B cell (primary cell): ENCODE measurements at regions of chr3 and their contacts with region 1.

Region 1: GRCh38 chr3:197002701-197003454 is 26.7 kb downstream of the MELTF start:
- DNase-seq: peak; percentile 89
- ATAC-seq: peak; percentile 81
- H3K4me3 ChIP-seq: peak overlapping the region in 3 of 5 experiments; percentile 56 to 59 (median 58)
- H3K4me3 Mint-ChIP-seq: no peak overlapping the region
- H3K27ac ChIP-seq: no peak overlapping the region
- H3K27ac Mint-ChIP-seq: no peak overlapping the region
- H3K4me1 ChIP-seq: peaks cover 7 to 13% of the 10 kb centered on the region in 2 donors
- H3K4me1 Mint-ChIP-seq: peaks cover 15% of the 10 kb centered on the region
- H3K27me3 ChIP-seq: peaks cover 0 to 10% (median 4%) of the 10 kb centered on the region in 4 experiments
- H3K27me3 Mint-ChIP-seq: peaks cover 15% of the 10 kb centered on the region
- CTCF ChIP-seq: peak; percentile 75

Region 2: GRCh38 chr3:196872316-196872715 is 130.6 kb before region 1 on chr3:
- CTCF ChIA-PET with region 1: no interaction called
- POLR2A ChIA-PET with region 1: no interaction called
- intact Hi-C with region 1: no loop called
- DNase-seq: no peak
- ATAC-seq: no peak
- H3K4me3 ChIP-seq: no peak overlapping the region
- H3K4me3 Mint-ChIP-seq: no peak overlapping the region
- H3K27ac ChIP-seq: no peak overlapping the region
- H3K27ac Mint-ChIP-seq: no peak overlapping the region
- H3K4me1 ChIP-seq: peaks cover 12 to 16% of the 10 kb centered on the region in 2 donors
- H3K4me1 Mint-ChIP-seq: peaks cover 39% of the 10 kb centered on the region
- H3K27me3 ChIP-seq: no peaks in the 10 kb centered on the region
- H3K27me3 Mint-ChIP-seq: no peaks in the 10 kb centered on the region
- CTCF ChIP-seq: no peak

Region 3: GRCh38 chr3:196979545-196979944 is 23.3 kb before region 1 on chr3:
- CTCF ChIA-PET with region 1: no interaction called
- POLR2A ChIA-PET with region 1: no interaction called
- intact Hi-C with region 1: loop called (anchors 2 kb)
- DNase-seq: no peak
- ATAC-seq: no peak
- H3K4me3 ChIP-seq: no peak overlapping the region
- H3K4me3 Mint-ChIP-seq: no peak overlapping the region
- H3K27ac ChIP-seq: no peak overlapping the region
- H3K27ac Mint-ChIP-seq: no peak overlapping the region
- H3K4me1 ChIP-seq: peaks cover 0 to 6% of the 10 kb centered on the region in 2 donors
- H3K4me1 Mint-ChIP-seq: no peaks in the 10 kb centered on the region
- H3K27me3 ChIP-seq: peaks cover 0 to 4% (median 0%) of the 10 kb centered on the region in 4 experiments
- H3K27me3 Mint-ChIP-seq: peaks cover 38% of the 10 kb centered on the region
- CTCF ChIP-seq: no peak

Region 4: DNA sequence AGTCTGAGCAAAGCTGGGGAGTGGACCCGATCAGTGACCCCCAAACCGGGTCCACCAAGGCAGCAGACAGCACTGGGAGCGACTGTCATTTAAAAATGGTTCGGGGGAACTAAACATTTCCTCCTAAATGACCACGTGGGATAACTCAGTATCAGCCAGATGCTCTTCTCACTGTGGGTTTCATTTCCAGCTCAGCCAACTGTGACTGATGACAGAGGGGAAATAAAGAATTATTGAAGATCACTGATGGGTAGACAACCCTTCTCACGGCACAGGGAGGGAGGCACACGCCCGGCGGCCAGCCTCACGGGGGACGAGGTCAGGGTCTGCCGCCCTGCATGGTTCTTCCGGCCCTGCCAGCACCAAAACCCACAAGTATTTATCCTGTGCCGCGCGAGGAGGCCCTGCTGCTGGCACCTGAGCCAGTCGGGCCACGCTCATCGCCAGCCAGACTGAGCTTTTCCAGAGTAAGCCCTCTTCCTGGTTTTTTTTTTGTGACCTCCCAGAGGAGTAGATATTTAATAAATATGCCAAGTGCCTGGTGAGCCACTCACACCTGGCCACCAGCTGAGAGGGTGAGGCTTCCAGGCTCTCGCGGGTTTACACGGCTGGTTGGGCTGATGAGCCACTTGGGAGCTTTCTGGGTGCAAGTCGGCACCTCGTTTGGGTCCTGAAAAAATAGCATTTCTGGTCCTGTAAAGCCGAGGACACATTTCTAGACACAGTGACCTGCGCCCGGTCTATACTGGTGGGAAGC is 20.5 kb after region 1 on chr3:
- CTCF ChIA-PET with region 1: interaction called, 64 read pairs
- POLR2A ChIA-PET with region 1: interaction called, 13 read pairs
- intact Hi-C with region 1: no loop called
- DNase-seq: peak; percentile 91
- ATAC-seq: peak; percentile 89
- H3K4me3 ChIP-seq: peak overlapping the region in 4 of 5 experiments; percentile 26 to 55 (median 40)
- H3K4me3 Mint-ChIP-seq: peak overlapping the region; percentile 92
- H3K27ac ChIP-seq: peak overlapping the region in 1 of 2 donors; percentile 15
- H3K27ac Mint-ChIP-seq: peak overlapping the region; percentile 97
- H3K4me1 ChIP-seq: peaks cover 26 to 27% of the 10 kb centered on the region in 2 donors
- H3K4me1 Mint-ChIP-seq: peaks cover 36% of the 10 kb centered on the region
- H3K27me3 ChIP-seq: peaks cover 0 to 46% (median 3%) of the 10 kb centered on the region in 4 experiments
- H3K27me3 Mint-ChIP-seq: peaks cover 24% of the 10 kb centered on the region
- CTCF ChIP-seq: no peak

Region 5: GRCh38 chr3:197029511-197030167 is 26.8 kb after region 1 on chr3 and contains the start of gene MELTF:
- CTCF ChIA-PET with region 1: interaction called, 64 read pairs
- POLR2A ChIA-PET with region 1: interaction called, 4 read pairs
- intact Hi-C with region 1: loop called (anchors 1 kb)
- DNase-seq: peak; percentile 77
- ATAC-seq: peak; percentile 86
- H3K4me3 ChIP-seq: peak within 1 kb of the TSS in 4 of 5 experiments; percentile 31 to 52 (median 50)
- H3K4me3 Mint-ChIP-seq: peak within 1 kb of the TSS; percentile 81
- H3K27ac ChIP-seq: no peak within 1 kb of the TSS
- H3K27ac Mint-ChIP-seq: peak within 1 kb of the TSS; percentile 26
- H3K4me1 ChIP-seq: peaks cover 17 to 19% of the 10 kb centered on the region in 2 donors
- H3K4me1 Mint-ChIP-seq: peaks cover 20% of the 10 kb centered on the region
- H3K27me3 ChIP-seq: peaks cover 0 to 64% (median 14%) of the 10 kb centered on the region in 4 experiments
- H3K27me3 Mint-ChIP-seq: peaks cover 31% of the 10 kb centered on the region
- CTCF ChIP-seq: peak; percentile 92
- total RNA-seq, gene MELTF: 2.9 and 3.2 TPM in 2 replicates

Region 6: DNA sequence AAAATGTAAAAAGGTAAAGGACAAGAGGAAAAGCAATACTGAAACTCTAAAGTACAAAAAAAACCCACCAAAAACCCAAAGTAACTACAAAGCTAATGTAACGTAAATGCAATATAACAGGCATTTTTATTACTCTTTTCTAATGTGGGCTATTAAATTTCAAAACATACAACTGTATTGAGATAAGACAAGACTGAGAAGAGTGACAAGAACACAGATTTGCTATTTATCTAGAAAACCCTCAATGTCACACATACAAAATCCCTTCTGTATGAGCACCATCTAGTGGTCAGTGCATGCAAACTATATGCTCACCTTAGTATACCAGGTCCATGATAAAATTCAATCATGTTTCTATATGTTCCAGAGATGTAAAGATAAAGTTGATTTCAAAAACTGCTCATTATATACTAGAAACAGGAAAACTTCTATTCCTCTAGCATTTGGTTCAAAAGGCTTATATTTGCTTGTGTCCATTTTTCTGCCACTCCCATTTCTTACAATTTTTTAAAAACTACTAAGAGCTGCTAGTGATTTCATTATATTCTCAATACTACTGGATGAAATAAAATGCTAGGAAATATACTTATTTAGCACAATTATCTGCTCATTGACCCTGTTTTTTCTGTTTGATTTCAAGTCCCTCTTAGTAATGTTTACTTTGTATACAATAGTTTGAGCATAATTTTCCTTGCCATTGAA is 184.2 kb after region 1 on chr3:
- CTCF ChIA-PET with region 1: interaction called, 39 read pairs
- POLR2A ChIA-PET with region 1: no interaction called
- intact Hi-C with region 1: loop called (anchors 1 kb)
- DNase-seq: peak; percentile 74
- ATAC-seq: peak; percentile 69
- H3K4me3 ChIP-seq: no peak overlapping the region
- H3K4me3 Mint-ChIP-seq: no peak overlapping the region
- H3K27ac ChIP-seq: no peak overlapping the region
- H3K27ac Mint-ChIP-seq: no peak overlapping the region
- H3K4me1 ChIP-seq: no peaks in the 10 kb centered on the region
- H3K4me1 Mint-ChIP-seq: peaks cover 2% of the 10 kb centered on the region
- H3K27me3 ChIP-seq: no peaks in the 10 kb centered on the region
- H3K27me3 Mint-ChIP-seq: no peaks in the 10 kb centered on the region
- CTCF ChIP-seq: peak; percentile 97